Activated CD4-positive, alpha-beta T cell treated with anti-CD3 and anti-CD28 coated beads for 36 hours (primary cell): ENCODE measurements at regions of chr7 and their contacts with region 1.

Region 1: GRCh38 chr7:128387216-128388144 is 22.3 kb downstream of the IMPDH1 start:
- DNase-seq: peak; percentile 84
- ATAC-seq: peak; percentile 83
- H3K4me3 Mint-ChIP-seq: no peak overlapping the region
- H3K27ac Mint-ChIP-seq: no peak overlapping the region
- H3K4me1 Mint-ChIP-seq: peaks cover 2% of the 10 kb centered on the region
- H3K27me3 Mint-ChIP-seq: no peaks in the 10 kb centered on the region

Region 2: GRCh38 chr7:126993626-126994213 is 1393.8 kb before region 1 on chr7:
- CTCF ChIA-PET with region 1: no interaction called
- POLR2A ChIA-PET with region 1: no interaction called
- intact Hi-C with region 1: no loop called
- DNase-seq: no peak
- ATAC-seq: no peak
- H3K4me3 Mint-ChIP-seq: no peak overlapping the region
- H3K27ac Mint-ChIP-seq: no peak overlapping the region
- H3K4me1 Mint-ChIP-seq: no peaks in the 10 kb centered on the region
- H3K27me3 Mint-ChIP-seq: peaks cover 8% of the 10 kb centered on the region

Region 3: DNA sequence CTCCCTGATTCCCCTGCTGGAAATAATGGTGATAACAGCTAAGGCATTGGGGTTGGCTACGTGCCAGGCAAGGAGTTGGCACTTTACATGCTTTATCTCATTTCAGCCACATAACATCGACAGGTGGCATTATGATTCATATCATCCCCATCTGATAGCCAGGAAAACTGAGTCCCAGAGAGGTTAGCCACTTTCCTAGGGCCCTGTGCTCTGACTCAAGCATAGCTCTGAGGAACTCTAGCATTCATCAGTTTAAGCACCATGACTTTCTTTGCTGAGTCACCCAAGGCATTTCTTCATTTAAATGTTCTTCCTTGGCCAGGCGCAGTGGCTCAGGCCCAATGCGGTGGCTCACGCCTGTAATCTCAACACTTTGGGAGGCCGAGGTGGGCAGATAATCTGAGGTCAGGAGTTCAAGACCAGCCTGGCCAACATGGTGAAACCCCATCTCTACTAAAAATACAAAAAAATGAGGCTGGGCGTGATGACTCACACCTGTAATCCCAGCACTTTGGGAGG is 139.7 kb before region 1 on chr7:
- CTCF ChIA-PET with region 1: no interaction called
- POLR2A ChIA-PET with region 1: no interaction called
- intact Hi-C with region 1: no loop called
- DNase-seq: peak; percentile 15
- ATAC-seq: no peak
- H3K4me3 Mint-ChIP-seq: no peak overlapping the region
- H3K27ac Mint-ChIP-seq: no peak overlapping the region
- H3K4me1 Mint-ChIP-seq: no peaks in the 10 kb centered on the region
- H3K27me3 Mint-ChIP-seq: peaks cover 10% of the 10 kb centered on the region

Region 4: GRCh38 chr7:128304212-128304611 is 83.3 kb before region 1 on chr7:
- CTCF ChIA-PET with region 1: no interaction called
- POLR2A ChIA-PET with region 1: no interaction called
- intact Hi-C with region 1: no loop called
- DNase-seq: no peak
- ATAC-seq: no peak
- H3K4me3 Mint-ChIP-seq: no peak overlapping the region
- H3K27ac Mint-ChIP-seq: no peak overlapping the region
- H3K4me1 Mint-ChIP-seq: no peaks in the 10 kb centered on the region
- H3K27me3 Mint-ChIP-seq: no peaks in the 10 kb centered on the region

Region 5: DNA sequence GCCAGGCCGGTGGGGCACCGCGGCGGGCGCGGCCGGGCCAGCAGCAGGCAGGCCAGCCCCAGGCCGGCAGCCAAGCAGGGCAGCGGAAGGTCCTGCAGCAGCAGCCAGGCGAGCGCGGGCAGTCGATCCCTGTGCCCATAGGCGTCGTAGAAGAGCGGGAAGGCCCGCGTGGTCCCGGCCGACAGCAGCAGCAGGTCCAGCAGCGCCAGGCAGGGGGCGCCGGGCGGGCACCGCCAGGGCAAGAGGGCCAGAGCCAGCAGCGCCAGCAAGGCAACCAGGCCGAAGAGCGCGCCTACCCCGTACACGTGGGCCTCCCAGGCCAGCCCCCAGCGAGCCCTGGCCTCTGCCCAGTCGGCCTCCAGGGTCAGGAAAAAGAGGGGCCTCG is 35.3 kb before region 1 on chr7:
- CTCF ChIA-PET with region 1: interaction called, 321 read pairs
- POLR2A ChIA-PET with region 1: interaction called, 4 read pairs
- intact Hi-C with region 1: loop called (anchors 1 kb)
- DNase-seq: peak; percentile 66
- ATAC-seq: peak; percentile 44
- H3K4me3 Mint-ChIP-seq: no peak overlapping the region
- H3K27ac Mint-ChIP-seq: no peak overlapping the region
- H3K4me1 Mint-ChIP-seq: no peaks in the 10 kb centered on the region
- H3K27me3 Mint-ChIP-seq: peaks cover 29% of the 10 kb centered on the region

Region 6: DNA sequence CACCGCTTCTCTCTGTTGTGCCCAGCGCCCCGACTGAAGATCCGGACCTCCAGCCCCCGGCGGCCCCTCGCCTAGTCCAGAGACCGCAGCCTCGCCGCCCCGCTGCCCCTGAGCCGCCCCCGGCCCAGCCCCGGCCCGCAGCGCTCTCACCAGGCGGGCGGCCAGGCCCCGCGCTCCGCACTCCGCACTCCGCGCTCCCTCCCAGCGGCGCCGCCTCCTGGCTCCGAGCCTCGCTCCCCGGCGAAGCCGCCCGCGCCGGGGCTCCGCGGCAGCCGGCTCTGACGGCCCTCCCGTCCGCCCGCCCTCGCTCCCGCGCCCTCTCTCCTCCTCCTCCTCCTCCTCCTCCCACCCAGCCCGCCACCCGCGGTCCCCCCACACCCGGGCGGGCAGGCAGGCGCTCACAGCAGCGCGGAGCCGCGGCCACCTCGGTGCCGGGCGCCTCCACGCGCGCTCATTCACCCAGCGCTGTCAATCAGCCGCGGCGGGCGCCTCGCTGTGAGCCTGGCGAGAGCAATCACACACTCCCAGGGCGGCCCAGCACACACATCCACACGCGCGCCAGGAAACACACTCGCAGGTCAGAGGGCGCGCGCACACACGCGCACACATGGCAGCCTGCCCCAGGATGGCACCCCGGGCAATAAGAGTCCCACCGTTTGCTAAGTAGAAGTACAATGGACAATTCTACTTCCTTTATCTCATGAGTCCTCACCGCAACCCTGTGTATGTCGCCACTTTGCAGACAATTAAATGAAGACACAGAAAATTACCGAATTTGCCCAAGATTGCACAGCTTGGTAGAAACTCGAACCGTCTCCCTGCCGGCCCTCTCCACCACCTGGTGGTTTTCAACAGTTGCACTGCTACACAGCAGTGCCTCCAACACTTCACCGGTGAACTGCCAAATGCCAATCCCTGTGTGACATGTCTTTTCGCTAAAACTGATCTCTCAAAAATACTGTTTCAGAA is 25.8 kb before region 1 on chr7 and contains the start of gene PRRT4:
- CTCF ChIA-PET with region 1: interaction called, 11 read pairs
- POLR2A ChIA-PET with region 1: no interaction called
- intact Hi-C with region 1: no loop called
- DNase-seq: peak; percentile 59
- ATAC-seq: peak; percentile 53
- H3K4me3 Mint-ChIP-seq: peak within 1 kb of the TSS; percentile 68
- H3K27ac Mint-ChIP-seq: peak within 1 kb of the TSS; percentile 64
- H3K4me1 Mint-ChIP-seq: peaks cover 24% of the 10 kb centered on the region
- H3K27me3 Mint-ChIP-seq: peaks cover 48% of the 10 kb centered on the region
- total RNA-seq, gene PRRT4: 0.23 to 0.39 TPM

Region 7: DNA sequence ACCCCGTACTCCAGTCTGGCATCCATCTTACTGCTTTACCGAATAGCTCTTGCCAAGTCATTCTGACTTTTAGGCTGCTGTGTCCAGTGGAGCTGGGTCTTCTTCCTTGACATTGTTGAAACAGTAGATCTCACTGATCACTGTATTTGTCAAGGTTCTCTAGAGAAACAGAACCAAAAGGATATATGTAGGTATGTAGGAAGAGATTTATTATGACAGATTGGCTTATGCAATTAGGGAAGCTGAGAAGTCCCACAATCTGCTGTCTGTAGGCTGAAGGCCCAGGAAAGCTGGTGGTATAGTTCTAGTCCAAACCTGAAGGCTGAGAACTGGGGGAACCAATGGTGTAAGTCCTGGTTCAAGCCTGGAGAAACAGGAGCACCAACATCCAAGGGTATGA is 13.9 kb before region 1 on chr7:
- CTCF ChIA-PET with region 1: interaction called, 20 read pairs
- POLR2A ChIA-PET with region 1: no interaction called
- intact Hi-C with region 1: no loop called
- DNase-seq: no peak
- ATAC-seq: no peak
- H3K4me3 Mint-ChIP-seq: no peak overlapping the region
- H3K27ac Mint-ChIP-seq: no peak overlapping the region
- H3K4me1 Mint-ChIP-seq: no peaks in the 10 kb centered on the region
- H3K27me3 Mint-ChIP-seq: peaks cover 3% of the 10 kb centered on the region

Region 8: DNA sequence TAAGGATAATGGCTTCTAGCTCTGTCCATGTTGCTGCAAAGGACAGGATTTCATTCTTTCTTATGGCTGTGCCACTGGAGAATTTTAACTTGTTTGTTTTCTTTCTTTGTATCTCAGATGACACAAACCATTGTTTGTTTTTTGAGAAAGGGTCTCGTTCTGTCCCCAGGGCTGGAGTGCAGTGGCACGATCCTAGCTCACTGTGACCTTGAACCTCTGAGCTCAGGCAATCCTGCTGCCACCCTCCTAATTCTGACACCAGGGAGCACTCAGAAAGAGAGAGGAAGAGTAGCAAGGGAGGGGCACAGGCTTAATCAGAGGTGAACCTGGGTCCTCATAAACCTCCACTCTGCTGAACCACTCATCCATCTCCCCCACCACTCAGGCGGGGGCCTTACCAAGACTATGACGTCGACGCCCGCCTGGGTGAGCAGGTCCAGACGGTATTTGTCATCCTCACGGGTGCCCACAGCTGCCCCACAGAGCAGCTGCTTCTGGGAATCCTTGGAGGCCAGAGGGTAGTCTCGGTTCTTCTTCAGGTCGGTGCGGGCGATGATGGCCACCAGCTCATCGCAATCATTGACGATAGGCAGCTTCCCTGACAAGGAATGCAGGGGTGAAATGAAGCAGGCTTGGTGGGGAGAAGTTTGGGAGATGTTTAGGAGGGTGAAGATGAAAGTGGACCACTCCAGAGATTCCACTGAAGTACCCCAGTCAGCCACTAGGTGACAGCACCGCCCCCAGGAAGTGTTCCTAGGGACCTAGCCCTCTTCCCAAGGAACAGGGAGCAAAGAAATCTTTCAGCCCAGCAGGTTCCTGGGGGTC is 10.7 kb after region 1 on chr7:
- CTCF ChIA-PET with region 1: interaction called, 15 read pairs
- POLR2A ChIA-PET with region 1: no interaction called
- intact Hi-C with region 1: no loop called
- DNase-seq: peak; percentile 65
- ATAC-seq: peak; percentile 59
- H3K4me3 Mint-ChIP-seq: no peak overlapping the region
- H3K27ac Mint-ChIP-seq: no peak overlapping the region
- H3K4me1 Mint-ChIP-seq: peaks cover 5% of the 10 kb centered on the region
- H3K27me3 Mint-ChIP-seq: no peaks in the 10 kb centered on the region